AG04450 (cell line): ENCODE measurements at regions of chr4 and their contacts with region 1.

Region 1: DNA sequence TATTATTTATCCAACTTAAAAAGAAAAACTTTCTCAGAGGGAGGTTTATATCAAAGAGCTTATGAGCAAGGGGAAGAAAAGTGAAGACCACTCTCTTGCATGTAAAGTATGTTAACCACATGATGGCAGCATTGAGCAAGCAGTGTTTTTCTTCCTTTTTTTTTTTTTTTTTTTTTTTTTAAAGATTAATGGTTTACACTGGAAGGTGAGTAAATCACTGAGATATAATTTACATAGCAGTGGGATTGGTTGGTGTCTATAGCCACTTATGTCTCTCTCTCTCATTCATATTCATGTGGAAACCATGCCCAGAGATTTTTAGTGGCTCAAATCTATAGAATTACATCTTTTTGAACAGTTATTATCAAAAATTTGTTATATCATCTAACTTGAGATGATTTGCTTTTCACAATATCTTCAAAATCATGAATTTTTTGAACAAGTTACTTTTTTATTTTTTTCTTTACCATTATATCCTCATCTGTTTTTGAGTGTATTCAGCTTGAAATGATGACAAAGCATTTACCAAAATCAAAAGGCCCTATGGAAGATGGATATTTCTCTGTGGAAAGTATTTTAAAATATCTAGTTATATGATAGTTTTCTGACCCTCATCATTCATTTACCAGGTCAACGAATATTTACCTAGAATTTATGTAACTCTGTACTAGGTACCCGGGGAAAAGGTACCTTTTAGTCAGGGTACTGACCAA is 31.6 kb downstream of the MTHFD2L start:
- DNase-seq: peak; percentile 15
- H3K4me3 ChIP-seq: no peak overlapping the region
- H3K27ac ChIP-seq: no peak overlapping the region
- H3K27me3 ChIP-seq: no peaks in the 10 kb centered on the region
- CTCF ChIP-seq: peak; percentile 74

Region 2: DNA sequence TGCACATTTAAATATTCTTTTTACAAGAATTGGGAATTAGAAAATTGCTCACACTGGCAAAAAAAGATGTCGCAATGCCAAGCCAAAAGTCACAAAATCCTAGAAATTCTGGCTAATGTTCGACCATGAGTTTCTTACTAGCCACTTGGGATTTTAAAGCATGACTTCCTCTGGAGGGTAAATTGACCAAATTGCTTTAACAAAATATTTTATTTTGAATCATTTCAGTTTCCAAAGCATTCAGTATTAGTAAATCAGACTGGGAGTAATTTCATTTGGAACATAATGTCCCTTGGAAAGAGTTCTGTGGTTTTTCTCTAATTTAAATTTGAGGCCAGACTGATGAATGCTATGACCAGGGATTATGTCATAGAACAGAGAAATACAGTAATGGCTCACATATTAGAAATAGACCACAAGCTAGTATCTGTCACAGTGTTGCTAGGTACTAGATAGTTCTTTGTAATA is 183.4 kb before region 1 on chr4:
- CTCF ChIA-PET with region 1: no interaction called
- POLR2A ChIA-PET with region 1: no interaction called
- DNase-seq: no peak
- H3K4me3 ChIP-seq: no peak overlapping the region
- H3K27ac ChIP-seq: no peak overlapping the region
- H3K27me3 ChIP-seq: no peaks in the 10 kb centered on the region
- CTCF ChIP-seq: no peak

Region 3: DNA sequence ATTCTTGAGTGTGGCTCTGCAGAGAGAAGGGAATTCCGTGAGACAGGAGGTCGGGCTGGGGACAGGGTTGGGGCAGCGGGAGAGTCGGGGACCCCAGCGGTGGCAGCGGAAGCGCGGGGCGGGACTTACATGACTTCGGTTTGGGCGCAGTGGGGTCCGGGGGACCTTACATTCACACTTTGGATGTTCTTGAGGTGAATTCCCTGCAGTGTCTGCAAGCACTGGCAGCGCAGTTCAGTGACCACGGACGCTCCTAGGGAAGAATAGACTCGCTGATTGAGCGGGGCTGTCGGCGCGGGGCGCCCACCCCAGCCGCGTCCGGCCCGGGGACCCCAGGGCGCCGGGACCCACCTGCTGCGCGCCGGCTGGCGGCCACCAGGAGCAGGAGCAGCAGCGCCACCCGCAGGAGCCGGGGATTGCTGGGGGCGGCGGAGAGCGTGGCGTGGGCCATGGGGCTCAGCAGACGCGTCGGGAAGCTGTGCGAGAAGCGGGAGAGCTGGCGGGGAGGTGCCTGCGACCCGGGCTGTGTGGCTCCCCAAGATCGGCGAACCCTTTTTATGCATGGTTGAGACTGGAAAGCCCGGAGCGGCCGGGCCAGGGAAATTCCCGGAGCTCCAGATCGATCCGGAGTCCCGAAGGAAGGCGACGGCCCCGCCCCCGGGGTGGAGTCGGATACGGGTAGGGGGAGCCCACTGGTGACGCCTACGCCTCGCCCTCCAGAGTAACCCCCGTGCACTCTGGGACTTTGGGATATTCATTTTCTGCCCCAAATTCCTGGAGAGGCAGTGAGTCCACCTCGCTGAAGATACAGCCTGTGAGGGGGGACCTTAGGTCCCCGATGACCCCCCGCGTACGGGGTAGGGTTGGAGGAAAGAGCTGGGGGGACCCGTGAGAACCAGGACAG is 151.1 kb before region 1 on chr4 and contains the start of gene CXCL3:
- CTCF ChIA-PET with region 1: no interaction called
- POLR2A ChIA-PET with region 1: no interaction called
- DNase-seq: no peak
- H3K4me3 ChIP-seq: peak within 1 kb of the TSS; percentile 78
- H3K27ac ChIP-seq: peak within 1 kb of the TSS; percentile 22
- H3K27me3 ChIP-seq: no peaks in the 10 kb centered on the region
- CTCF ChIP-seq: peak; percentile 23
- polyA plus RNA-seq, gene CXCL3: 0.43 and 0.74 TPM in 2 replicates

Region 4: DNA sequence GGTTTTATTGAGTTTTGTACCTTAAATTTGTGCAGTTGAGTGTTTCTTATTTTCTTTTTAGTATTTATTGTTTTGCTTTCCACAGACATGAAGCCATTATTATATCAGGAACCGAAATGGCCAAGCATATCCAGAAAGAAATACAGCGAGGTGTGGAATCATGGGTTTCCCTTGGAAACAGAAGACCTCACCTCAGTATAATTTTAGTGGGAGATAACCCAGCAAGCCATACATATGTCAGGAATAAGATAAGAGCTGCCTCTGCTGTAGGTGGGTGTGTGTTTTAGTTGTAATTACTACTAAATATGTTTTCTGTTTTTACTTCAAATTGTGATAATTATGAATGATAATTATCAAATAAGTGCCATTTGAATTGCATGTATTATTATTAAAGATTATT is 15.1 kb before region 1 on chr4:
- CTCF ChIA-PET with region 1: interaction called, 19 read pairs
- POLR2A ChIA-PET with region 1: no interaction called
- DNase-seq: no peak
- H3K4me3 ChIP-seq: no peak overlapping the region
- H3K27ac ChIP-seq: no peak overlapping the region
- H3K27me3 ChIP-seq: no peaks in the 10 kb centered on the region
- CTCF ChIP-seq: no peak

Region 5: GRCh38 chr4:74311696-74312313 is 122.3 kb after region 1 on chr4:
- CTCF ChIA-PET with region 1: interaction called, 76 read pairs
- POLR2A ChIA-PET with region 1: no interaction called
- DNase-seq: peak; percentile 13
- H3K4me3 ChIP-seq: no peak overlapping the region
- H3K27ac ChIP-seq: no peak overlapping the region
- H3K27me3 ChIP-seq: no peaks in the 10 kb centered on the region
- CTCF ChIP-seq: peak; percentile 72

Region 6: DNA sequence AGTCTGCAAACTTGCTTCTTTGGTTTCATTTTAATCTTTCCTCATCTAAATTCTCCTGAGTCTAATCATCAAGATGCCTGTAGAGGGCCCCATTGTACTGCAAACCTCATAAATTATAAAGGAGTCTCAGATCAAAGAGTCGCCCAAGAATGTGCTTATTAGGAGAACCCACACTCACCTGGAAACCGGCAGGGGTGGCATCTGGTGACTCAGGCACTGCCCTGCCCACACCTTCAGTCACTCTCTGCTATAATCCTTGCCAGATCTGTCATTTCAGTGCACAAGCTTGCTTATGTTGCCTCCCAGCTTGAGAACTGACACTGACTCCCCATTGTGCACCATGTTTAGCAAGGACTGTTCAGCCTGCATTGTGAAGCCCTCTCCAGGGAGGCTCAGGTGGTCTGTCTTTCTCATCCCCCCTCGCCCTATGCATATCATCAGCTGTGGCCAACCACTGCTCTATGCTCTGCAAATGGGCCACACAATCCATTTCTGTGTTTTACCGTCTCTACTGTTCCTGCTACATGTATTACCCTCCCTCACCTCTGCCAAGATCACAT is 131.2 kb after region 1 on chr4:
- CTCF ChIA-PET with region 1: interaction called, 76 read pairs
- POLR2A ChIA-PET with region 1: no interaction called
- DNase-seq: peak; percentile 46
- H3K4me3 ChIP-seq: no peak overlapping the region
- H3K27ac ChIP-seq: no peak overlapping the region
- H3K27me3 ChIP-seq: no peaks in the 10 kb centered on the region
- CTCF ChIP-seq: peak; percentile 69